Left cardiac atrium (tissue), 4 donors: ENCODE measurements at regions of chr18 and their contacts with region 1.

Region 1: GRCh38 chr18:36809590-36810381 is 19.0 kb downstream of the TPGS2 start:
- DNase-seq: no peak
- ATAC-seq: peak; percentile 77 to 78

Region 2: DNA sequence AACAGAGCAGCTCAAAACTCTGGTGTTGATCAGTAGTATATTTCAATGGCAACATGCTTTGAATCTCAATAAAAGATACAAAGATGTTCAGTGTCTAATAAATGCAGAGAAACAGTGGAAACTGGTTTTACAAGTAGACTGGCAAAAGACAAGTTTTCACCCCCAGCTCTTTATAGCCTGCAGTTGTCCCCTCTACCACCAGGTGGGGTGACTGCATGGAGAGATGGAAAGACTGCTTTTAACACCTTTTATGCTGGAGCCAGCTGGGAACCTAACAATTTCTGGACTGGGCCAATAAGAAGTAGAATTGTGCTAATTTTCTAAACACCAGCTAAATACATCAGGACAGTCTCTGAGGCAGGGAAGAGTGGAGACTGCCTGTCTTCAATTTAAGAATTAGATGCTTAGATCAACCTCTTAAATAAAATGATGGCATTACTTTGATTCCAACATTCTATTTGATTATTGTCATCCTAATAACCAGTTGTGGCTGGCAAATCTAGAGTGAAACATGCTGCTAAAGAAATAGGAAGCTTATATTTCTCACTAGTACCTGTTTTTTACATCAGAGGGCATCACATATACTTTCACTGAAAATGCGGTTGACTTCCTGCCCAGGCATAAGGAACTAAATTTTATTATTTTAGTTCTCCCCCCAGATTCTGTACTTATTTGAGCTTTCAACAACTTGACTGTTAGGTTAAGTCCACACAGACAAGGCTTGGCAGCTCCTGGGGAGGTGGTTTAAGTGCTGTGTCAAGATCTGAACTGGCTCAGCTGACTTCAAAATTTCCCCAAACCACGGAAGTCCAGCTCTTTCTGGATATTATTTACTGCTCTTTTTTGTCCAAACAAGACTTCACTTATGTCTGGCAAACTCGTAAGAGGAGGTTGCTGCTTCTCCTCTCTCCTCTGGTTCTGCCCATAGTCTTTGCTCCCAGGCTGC is 121.5 kb before region 1 on chr18:
- intact Hi-C with region 1: loop called in 1 of 2 experiments (anchors 5 kb)
- DNase-seq: peak; percentile 50
- ATAC-seq: peak; percentile 61 to 63

Region 3: DNA sequence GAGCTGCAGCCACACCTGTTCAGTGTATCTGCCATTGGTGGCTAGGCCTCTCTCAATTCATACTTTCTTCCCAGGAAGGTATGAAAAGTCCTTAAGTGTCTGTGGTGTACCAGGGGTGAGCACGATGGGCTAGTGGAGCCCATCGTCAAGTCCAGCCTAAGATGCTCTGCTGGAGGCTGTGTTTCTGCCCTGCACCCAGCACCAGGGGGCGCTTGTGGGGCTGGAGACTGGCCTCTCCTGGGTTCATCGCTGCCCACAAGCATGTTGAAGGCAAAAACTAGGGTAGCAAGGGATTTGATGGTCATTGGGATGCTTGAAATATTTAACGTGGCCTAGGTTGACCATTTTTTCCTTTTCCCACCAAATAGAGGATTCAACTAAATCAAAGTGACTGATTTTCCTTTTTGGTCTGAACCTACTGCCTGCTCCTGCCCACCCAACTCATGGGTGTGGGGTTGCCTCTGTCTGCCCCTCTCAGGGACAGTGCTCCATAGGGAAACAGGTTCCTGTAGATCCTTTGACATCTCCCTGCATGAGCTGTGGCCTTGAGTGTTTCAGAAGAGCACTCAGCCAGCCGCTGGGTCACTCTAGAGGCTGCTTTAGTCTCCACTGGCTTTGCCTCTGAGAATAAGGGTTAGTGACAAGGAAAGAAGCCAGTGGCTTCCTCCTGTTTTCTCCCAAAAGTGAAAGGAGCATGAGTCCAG is 40.0 kb before region 1 on chr18:
- intact Hi-C with region 1: loop called in 1 of 2 experiments (anchors 2 kb)
- DNase-seq: no peak
- ATAC-seq: peak in 1 of 2 donors; percentile 73

Region 4: GRCh38 chr18:37055137-37055802 is 245.5 kb after region 1 on chr18:
- intact Hi-C with region 1: no loop called
- DNase-seq: no peak
- ATAC-seq: no peak